Left cardiac atrium (tissue), 4 donors: ENCODE measurements at regions of chr11 and their contacts with region 1.

Region 1: GRCh38 chr11:111665777-111666176 is 63.5 kb downstream of the SIK2 start:
- DNase-seq: no peak
- ATAC-seq: peak in 1 of 2 donors; percentile 40

Region 2: DNA sequence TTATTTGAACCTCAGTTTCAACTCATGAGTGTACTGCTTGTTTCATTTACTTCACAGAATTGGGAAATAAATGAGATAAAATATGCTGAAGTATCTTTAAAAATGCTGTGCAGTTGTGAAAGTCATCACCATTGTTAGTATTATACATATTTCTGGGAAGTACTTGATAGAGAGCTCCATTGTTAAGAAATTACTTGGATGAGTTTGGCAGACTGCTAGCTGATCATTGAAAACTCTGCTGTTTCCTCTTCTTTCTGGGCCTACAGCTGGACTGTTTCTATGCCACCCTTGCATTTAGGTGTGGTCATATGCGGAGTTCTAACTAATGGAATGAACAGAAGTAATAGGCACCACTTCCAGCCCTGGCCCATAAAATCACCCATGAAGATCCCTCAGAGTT is 53.6 kb before region 1 on chr11:
- intact Hi-C with region 1: loop called in 1 of 2 experiments (anchors 10 kb)
- DNase-seq: no peak
- ATAC-seq: peak in 1 of 2 donors; percentile 30

Region 3: DNA sequence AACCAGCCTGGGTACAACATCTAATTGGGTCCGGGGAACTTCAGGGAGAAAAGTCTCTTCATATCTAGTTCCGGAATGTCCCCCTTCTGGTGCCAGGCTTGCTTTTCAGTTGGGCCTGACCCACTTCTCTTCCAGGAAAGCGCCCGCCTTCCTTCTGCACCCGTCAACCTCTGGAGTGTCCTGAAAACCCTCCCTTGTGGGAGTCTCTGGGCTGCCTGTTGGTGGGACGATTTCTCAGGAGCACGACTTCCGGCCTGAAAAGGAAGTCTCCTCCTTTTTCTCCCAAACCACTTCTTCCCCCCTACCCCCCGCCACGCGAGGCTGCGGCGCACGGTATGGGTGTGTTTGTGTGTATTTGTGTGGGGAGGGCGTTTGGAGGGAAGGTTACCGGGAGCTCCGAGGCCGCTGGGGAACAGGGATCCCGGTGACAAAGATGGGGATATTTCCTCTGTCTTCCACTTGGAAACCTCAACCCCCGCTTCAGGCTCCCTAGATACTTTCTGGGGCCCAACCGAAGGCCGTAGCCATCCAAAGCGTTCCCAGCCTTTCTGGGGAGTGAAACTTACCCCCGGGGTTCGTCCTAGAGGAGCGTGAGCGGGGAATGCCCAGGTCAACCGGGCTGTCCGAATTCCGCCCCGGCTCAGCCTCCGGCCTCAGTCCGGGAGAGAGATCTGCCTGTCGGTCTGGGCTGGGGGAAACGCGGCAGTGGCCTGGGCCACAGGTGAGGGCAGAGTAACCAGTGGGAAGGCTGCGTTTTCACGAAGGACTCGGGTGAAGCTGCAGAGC is 408.4 kb after region 1 on chr11 and contains the start of gene NKAPD1:
- intact Hi-C with region 1: no loop called
- DNase-seq: peak; percentile 83
- ATAC-seq: peak; percentile 92 to 94
- total RNA-seq, gene NKAPD1: 6.7 to 10.4 TPM